Right cardiac atrium (tissue), 5 donors: ENCODE measurements at regions of chr12 and their contacts with region 1.

Region 1: DNA sequence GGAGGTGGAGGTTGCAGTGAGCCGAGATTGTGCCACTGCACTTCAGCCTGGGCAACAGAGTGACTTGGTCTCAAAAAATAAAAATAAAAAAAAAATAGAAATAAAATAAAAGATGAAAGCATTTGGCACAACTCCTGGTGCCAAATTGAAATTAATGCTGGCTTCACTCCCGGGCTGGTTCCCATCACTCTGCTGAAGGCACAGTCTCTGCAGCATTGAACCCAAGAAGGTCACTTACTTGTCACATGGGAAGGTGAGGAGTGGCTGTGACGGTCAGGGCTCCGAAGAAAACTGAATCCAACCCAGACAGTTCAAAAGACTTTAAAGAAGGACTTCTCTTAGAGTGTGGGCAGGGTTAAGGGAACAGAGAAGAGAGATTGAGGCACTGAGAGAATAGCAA is 10.5 kb upstream of the CCDC63 start:
- DNase-seq: no peak
- ATAC-seq: no peak
- H3K4me3 ChIP-seq: no peak overlapping the region
- H3K27ac ChIP-seq: no peak overlapping the region
- H3K4me1 ChIP-seq: no peaks in the 10 kb centered on the region
- H3K27me3 ChIP-seq: no peaks in the 10 kb centered on the region

Region 2: DNA sequence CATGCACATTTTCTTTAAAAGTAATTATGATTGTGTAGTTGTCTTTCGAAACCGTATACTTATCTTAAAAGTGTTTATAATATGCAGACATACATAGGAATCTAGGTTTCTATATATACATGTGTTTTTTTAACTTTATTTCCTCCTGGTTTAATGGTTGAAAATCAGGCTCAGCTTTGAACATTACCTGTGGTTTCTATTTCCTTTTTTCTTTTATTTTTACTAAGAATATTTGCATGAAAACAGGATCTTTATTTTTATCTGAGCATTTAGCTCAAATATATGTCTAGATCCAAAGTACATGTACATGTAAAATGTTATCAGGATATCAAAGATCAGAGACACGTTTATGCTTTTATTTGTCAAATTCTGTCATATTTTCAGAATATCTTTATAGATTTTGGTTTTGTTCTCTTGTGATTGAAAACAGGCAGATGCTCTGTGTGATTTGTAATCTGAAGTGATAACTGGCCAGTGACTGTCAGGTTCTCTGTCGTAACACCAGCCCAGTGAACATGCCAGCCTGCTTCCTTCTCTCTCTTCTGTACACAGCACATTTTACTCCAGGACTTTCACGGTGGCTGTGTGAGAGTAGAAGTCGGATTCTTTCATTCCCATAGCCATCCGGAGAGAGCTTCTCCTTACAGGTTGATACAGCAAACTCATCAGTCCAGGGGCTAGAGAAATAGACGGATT is 208.6 kb before region 1 on chr12:
- intact Hi-C with region 1: loop called in 1 of 4 experiments (anchors 10 kb)
- DNase-seq: no peak
- ATAC-seq: no peak
- H3K4me3 ChIP-seq: no peak overlapping the region
- H3K27ac ChIP-seq: no peak overlapping the region
- H3K4me1 ChIP-seq: no peaks in the 10 kb centered on the region
- H3K27me3 ChIP-seq: no peaks in the 10 kb centered on the region

Region 3: GRCh38 chr12:110913119-110914056 is 77.1 kb after region 1 on chr12:
- intact Hi-C with region 1: no loop called
- DNase-seq: no peak
- ATAC-seq: no peak
- H3K4me3 ChIP-seq: no peak overlapping the region
- H3K27ac ChIP-seq: no peak overlapping the region
- H3K4me1 ChIP-seq: no peaks in the 10 kb centered on the region
- H3K27me3 ChIP-seq: no peaks in the 10 kb centered on the region